ENCODE measurements at regions of chr13 and their contacts with region 1.

Region 1: DNA sequence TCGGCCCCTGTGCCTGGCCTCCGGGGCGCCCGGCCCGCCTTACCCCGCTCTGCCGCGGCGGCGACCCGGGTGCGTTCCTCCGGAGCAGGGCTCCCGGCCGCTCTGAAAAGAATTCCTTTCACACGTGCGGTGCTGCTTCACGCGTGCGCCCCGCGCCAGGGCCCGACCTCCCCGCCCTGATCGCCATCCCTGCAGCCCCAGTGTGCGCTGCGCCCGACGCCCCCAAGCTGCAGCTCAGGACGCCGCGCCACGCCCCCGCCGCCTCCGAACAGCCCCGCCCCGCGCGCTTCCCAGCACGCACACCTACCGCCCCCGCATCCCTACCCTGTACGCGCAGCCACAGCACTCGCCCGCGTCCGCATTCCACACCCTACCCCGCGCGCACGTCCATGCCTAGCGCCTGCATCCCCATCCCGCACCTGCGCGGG is at the start of gene GJA3:
- DNase-seq: peak; percentile 65
- H3K4me3 Mint-ChIP-seq: peak within 1 kb of the TSS; percentile 75
- H3K27ac Mint-ChIP-seq: no peak within 1 kb of the TSS
- H3K4me1 Mint-ChIP-seq: peaks cover 13% of the 10 kb centered on the region
- H3K27me3 Mint-ChIP-seq: peaks cover 46% of the 10 kb centered on the region
- total RNA-seq, gene GJA3: 0.14 to 0.29 TPM

Region 2: GRCh38 chr13:19633479-19634255 is 527.2 kb before region 1 on chr13 and contains the start of gene MPHOSPH8:
- CTCF ChIA-PET with region 1: no interaction called
- POLR2A ChIA-PET with region 1: no interaction called
- intact Hi-C with region 1: loop called (anchors 1 kb)
- DNase-seq: peak; percentile 96
- H3K4me3 Mint-ChIP-seq: peak within 1 kb of the TSS; percentile 100
- H3K27ac Mint-ChIP-seq: peak within 1 kb of the TSS; percentile 98
- H3K4me1 Mint-ChIP-seq: peaks cover 25% of the 10 kb centered on the region
- H3K27me3 Mint-ChIP-seq: peaks cover 2% of the 10 kb centered on the region
- total RNA-seq, gene MPHOSPH8: 32.6 to 37.6 TPM

Region 3: GRCh38 chr13:19927117-19927748 is 233.6 kb before region 1 on chr13:
- CTCF ChIA-PET with region 1: interaction called, 6 read pairs
- POLR2A ChIA-PET with region 1: no interaction called
- intact Hi-C with region 1: loop called (anchors 1 kb)
- DNase-seq: no peak
- H3K4me3 Mint-ChIP-seq: no peak overlapping the region
- H3K27ac Mint-ChIP-seq: no peak overlapping the region
- H3K4me1 Mint-ChIP-seq: no peaks in the 10 kb centered on the region
- H3K27me3 Mint-ChIP-seq: no peaks in the 10 kb centered on the region

Region 4: GRCh38 chr13:19984430-19985218 is 176.2 kb before region 1 on chr13:
- CTCF ChIA-PET with region 1: interaction called, 10 read pairs
- POLR2A ChIA-PET with region 1: interaction called, 3 read pairs
- intact Hi-C with region 1: loop called (anchors 1 kb)
- DNase-seq: peak; percentile 32
- H3K4me3 Mint-ChIP-seq: no peak overlapping the region
- H3K27ac Mint-ChIP-seq: peak overlapping the region; percentile 73
- H3K4me1 Mint-ChIP-seq: peaks cover 43% of the 10 kb centered on the region
- H3K27me3 Mint-ChIP-seq: no peaks in the 10 kb centered on the region

Region 5: DNA sequence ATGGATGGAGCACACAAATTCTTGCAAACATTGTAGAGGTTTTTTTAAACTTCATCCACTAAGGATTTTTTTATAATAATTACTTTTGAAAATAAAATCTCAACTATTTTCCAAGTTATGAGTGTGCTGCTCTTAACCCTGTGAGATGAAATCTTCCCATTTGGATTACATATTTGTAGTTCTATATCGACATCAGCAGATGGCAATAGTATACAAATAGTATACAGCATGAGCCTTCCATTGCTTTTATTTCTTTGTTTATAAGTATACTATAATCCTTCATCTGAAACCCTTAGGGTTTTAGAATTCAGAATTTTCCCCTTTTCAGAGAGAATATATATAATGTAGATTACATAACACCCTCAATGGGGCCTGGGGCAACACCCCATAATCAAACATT is 70.5 kb before region 1 on chr13:
- CTCF ChIA-PET with region 1: interaction called, 3 read pairs
- POLR2A ChIA-PET with region 1: no interaction called
- intact Hi-C with region 1: loop called (anchors 5 kb)
- DNase-seq: no peak
- H3K4me3 Mint-ChIP-seq: no peak overlapping the region
- H3K27ac Mint-ChIP-seq: no peak overlapping the region
- H3K4me1 Mint-ChIP-seq: no peaks in the 10 kb centered on the region
- H3K27me3 Mint-ChIP-seq: no peaks in the 10 kb centered on the region

Region 6: GRCh38 chr13:20136781-20137703 is 23.8 kb before region 1 on chr13:
- CTCF ChIA-PET with region 1: no interaction called
- POLR2A ChIA-PET with region 1: no interaction called
- intact Hi-C with region 1: loop called (anchors 2 kb)
- DNase-seq: peak; percentile 67
- H3K4me3 Mint-ChIP-seq: peak overlapping the region; percentile 20
- H3K27ac Mint-ChIP-seq: no peak overlapping the region
- H3K4me1 Mint-ChIP-seq: peaks cover 4% of the 10 kb centered on the region
- H3K27me3 Mint-ChIP-seq: peaks cover 48% of the 10 kb centered on the region

Measured in activated CD4-positive, alpha-beta memory T cell treated with anti-CD3 and anti-CD28 coated beads for 36 hours (primary cell).